CD4-positive, alpha-beta T cell (primary cell): ENCODE measurements at regions of chr2 and their contacts with region 1.

Region 1: DNA sequence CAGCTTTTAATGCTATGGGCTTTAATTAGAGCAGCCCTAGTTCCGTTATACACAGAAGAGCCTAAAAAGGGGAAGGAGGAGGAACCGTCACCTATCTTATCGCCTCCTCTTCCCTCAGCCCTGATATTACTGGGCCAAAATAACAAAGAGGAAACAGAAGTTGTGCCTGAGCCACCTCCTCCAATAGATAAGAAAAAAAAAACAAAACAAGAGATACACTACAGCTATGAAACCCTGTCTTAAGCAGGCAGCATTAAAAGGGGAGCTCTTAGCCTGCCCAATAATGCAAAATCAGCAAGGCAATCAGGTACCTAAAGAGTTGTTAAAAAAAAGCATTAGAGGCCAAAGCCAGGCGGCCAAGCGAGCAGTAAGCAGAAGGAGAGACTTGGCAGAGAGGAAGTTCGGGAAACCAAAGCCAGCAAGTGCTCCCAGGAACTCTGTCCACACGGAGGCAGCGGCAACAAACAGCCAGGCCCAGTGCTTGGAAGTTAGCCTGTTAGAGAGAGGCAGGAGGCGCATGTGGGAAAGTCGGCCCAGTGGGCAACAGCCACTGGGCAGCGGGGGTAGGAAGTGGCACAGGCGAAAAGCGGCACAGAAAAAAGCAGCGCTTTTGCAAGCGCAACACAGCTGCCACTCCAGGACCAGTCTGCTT is 41.8 kb upstream of the PDK1 start:
- DNase-seq: no peak
- ATAC-seq: no peak
- H3K4me3 ChIP-seq: no peak overlapping the region
- H3K4me3 Mint-ChIP-seq: no peak overlapping the region
- H3K27ac ChIP-seq: no peak overlapping the region
- H3K27ac Mint-ChIP-seq: no peak overlapping the region
- H3K4me1 ChIP-seq: peaks cover 10% of the 10 kb centered on the region
- H3K4me1 Mint-ChIP-seq: peaks cover 24% of the 10 kb centered on the region
- H3K27me3 ChIP-seq: no peaks in the 10 kb centered on the region
- H3K27me3 Mint-ChIP-seq: no peaks in the 10 kb centered on the region
- CTCF ChIP-seq: no peak

Region 2: DNA sequence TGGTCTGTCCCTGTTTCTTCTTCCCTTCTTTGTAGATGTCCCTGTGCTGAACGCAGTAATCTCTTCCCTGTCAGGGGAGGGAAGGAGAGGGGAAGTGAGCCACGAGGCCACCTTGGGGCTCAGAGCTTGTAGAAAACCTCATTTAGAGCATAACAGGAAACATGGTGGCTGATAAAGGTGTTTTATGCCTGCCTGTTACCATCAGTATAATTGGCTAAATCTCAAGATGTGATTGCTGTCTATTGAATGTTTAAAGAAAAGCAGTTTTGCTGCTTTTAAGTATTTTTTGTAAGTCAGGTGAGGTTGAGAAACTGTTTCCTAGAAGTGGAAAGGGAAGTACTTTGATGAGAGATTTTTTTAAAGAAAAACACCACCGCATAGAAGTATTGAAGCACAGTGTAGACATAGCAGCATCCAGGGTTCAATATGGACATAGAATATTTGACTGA is 17.9 kb before region 1 on chr2:
- CTCF ChIA-PET with region 1: no interaction called
- POLR2A ChIA-PET with region 1: interaction called, 23 read pairs
- intact Hi-C with region 1: loop called in 1 of 2 experiments (anchors 1 kb)
- DNase-seq: peak; percentile 17 to 81 (median 51)
- ATAC-seq: peak; percentile 96
- H3K4me3 ChIP-seq: no peak overlapping the region
- H3K4me3 Mint-ChIP-seq: peak overlapping the region; percentile 83
- H3K27ac ChIP-seq: peak overlapping the region; percentile 63 to 73
- H3K27ac Mint-ChIP-seq: peak overlapping the region; percentile 95
- H3K4me1 ChIP-seq: peaks cover 49% of the 10 kb centered on the region
- H3K4me1 Mint-ChIP-seq: peaks cover 81% of the 10 kb centered on the region
- H3K27me3 ChIP-seq: no peaks in the 10 kb centered on the region
- H3K27me3 Mint-ChIP-seq: no peaks in the 10 kb centered on the region
- CTCF ChIP-seq: no peak